B cell (primary cell): ENCODE measurements at regions of chr15 and their contacts with region 1.

Region 1: GRCh38 chr15:89167267-89168176 is 53.9 kb downstream of the RLBP1 start:
- DNase-seq: no peak
- ATAC-seq: no peak
- H3K4me3 ChIP-seq: no peak overlapping the region
- H3K4me3 Mint-ChIP-seq: no peak overlapping the region
- H3K27ac ChIP-seq: no peak overlapping the region
- H3K27ac Mint-ChIP-seq: no peak overlapping the region
- H3K4me1 ChIP-seq: no peaks in the 10 kb centered on the region
- H3K4me1 Mint-ChIP-seq: peaks cover 4% of the 10 kb centered on the region
- H3K27me3 ChIP-seq: no peaks in the 10 kb centered on the region
- H3K27me3 Mint-ChIP-seq: no peaks in the 10 kb centered on the region
- CTCF ChIP-seq: no peak

Region 2: GRCh38 chr15:89206908-89207331 is 39.4 kb after region 1 on chr15:
- CTCF ChIA-PET with region 1: interaction called, 12 read pairs
- POLR2A ChIA-PET with region 1: no interaction called
- intact Hi-C with region 1: no loop called
- DNase-seq: peak; percentile 71
- ATAC-seq: peak; percentile 90
- H3K4me3 ChIP-seq: no peak overlapping the region
- H3K4me3 Mint-ChIP-seq: no peak overlapping the region
- H3K27ac ChIP-seq: no peak overlapping the region
- H3K27ac Mint-ChIP-seq: no peak overlapping the region
- H3K4me1 ChIP-seq: peaks cover 3% of the 10 kb centered on the region in 2 donors
- H3K4me1 Mint-ChIP-seq: peaks cover 9% of the 10 kb centered on the region
- H3K27me3 ChIP-seq: no peaks in the 10 kb centered on the region
- H3K27me3 Mint-ChIP-seq: peaks cover 4% of the 10 kb centered on the region
- CTCF ChIP-seq: peak; percentile 100

Region 3: GRCh38 chr15:89378296-89379151 is 211.0 kb after region 1 on chr15:
- CTCF ChIA-PET with region 1: no interaction called
- POLR2A ChIA-PET with region 1: no interaction called
- intact Hi-C with region 1: no loop called
- DNase-seq: peak; percentile 64
- ATAC-seq: peak; percentile 65
- H3K4me3 ChIP-seq: peak overlapping the region; percentile 28 to 57 (median 51)
- H3K4me3 Mint-ChIP-seq: peak overlapping the region; percentile 81
- H3K27ac ChIP-seq: no peak overlapping the region
- H3K27ac Mint-ChIP-seq: peak overlapping the region; percentile 81
- H3K4me1 ChIP-seq: peaks cover 20 to 29% of the 10 kb centered on the region in 2 donors
- H3K4me1 Mint-ChIP-seq: peaks cover 14% of the 10 kb centered on the region
- H3K27me3 ChIP-seq: peaks cover 0 to 81% (median 66%) of the 10 kb centered on the region in 4 experiments
- H3K27me3 Mint-ChIP-seq: peaks cover 72% of the 10 kb centered on the region
- CTCF ChIP-seq: no peak